ENCODE measurements at regions of chr2 and their contacts with region 1.

Region 1: DNA sequence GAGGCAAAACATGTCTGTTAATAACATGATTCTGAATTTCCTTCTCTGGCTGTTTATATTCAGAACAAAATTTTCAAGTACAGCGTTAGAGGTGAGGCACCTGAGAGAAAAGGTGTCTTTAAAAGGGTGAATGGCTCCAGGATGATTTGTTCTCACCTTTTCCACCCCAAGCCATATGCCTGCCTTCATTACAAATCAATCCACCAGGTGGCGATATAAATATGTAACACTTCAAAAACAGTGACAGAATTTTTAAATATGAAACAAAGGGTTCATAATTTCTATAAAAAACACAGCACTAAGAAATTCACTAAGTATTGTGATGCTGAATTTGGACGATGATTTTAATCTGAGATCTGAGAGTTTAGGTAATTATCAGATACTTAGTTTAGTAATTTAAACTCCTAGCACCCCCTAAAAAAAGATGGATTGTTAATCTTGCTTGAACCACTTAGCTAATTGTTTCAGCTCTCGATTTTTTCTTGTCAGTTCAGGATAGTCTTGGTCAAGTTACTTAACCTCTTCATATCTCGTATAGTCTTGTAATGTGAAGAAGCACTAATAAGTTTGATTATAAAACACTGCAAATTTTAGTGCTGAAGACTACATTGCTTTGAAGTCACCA is 528.8 kb downstream of the CPS1 start:
- DNase-seq: peak; percentile 62
- H3K4me3 Mint-ChIP-seq: no peak overlapping the region
- H3K27ac Mint-ChIP-seq: peak overlapping the region; percentile 56
- H3K4me1 Mint-ChIP-seq: peaks cover 22% of the 10 kb centered on the region
- H3K27me3 Mint-ChIP-seq: no peaks in the 10 kb centered on the region
- CTCF ChIP-seq: peak; percentile 54

Region 2: GRCh38 chr2:211132586-211132985 is 47.4 kb after region 1 on chr2:
- CTCF ChIA-PET with region 1: interaction called, 6 read pairs
- intact Hi-C with region 1: loop called (anchors 2 kb)
- DNase-seq: no peak
- H3K4me3 Mint-ChIP-seq: no peak overlapping the region
- H3K27ac Mint-ChIP-seq: peak overlapping the region; percentile 86
- H3K4me1 Mint-ChIP-seq: peaks cover 48% of the 10 kb centered on the region
- H3K27me3 Mint-ChIP-seq: no peaks in the 10 kb centered on the region
- CTCF ChIP-seq: no peak

Region 3: DNA sequence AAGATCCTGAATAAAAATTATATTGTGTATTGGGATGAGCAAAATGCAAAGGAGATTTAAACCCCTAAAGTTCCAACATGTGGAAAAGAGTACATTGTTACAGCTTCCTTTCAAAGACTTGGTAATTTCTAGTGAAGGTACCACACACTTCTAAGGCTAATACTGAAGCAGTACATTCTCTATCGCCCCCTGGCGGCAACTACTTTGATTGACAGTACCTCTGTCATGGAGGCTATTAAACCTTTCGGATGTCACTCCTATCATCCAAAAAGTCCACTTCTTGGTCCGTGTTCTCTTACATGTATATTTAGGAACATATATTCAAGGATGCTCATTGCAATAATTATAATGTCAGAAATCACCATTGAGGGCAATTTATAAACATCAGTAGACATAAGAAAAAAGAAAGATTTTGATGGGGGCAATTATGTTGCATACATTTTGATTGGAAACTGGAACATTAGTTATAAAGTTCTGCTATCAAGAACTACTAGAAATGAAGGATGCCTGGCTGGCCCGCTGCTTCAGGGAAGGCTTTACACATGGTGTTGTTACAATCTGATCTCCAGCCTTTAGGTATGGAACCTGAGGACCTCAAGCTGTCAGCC is 72.8 kb after region 1 on chr2:
- CTCF ChIA-PET with region 1: interaction called, 17 read pairs
- intact Hi-C with region 1: loop called (anchors 1 kb)
- DNase-seq: peak; percentile 80
- H3K4me3 Mint-ChIP-seq: no peak overlapping the region
- H3K27ac Mint-ChIP-seq: no peak overlapping the region
- H3K4me1 Mint-ChIP-seq: peaks cover 13% of the 10 kb centered on the region
- H3K27me3 Mint-ChIP-seq: no peaks in the 10 kb centered on the region
- CTCF ChIP-seq: peak; percentile 84

Region 4: GRCh38 chr2:211391189-211391567 is 306.0 kb after region 1 on chr2:
- CTCF ChIA-PET with region 1: no interaction called
- intact Hi-C with region 1: loop called (anchors 5 kb)
- DNase-seq: no peak
- H3K4me3 Mint-ChIP-seq: no peak overlapping the region
- H3K27ac Mint-ChIP-seq: peak overlapping the region; percentile 33
- H3K4me1 Mint-ChIP-seq: peaks cover 26% of the 10 kb centered on the region
- H3K27me3 Mint-ChIP-seq: no peaks in the 10 kb centered on the region
- CTCF ChIP-seq: no peak

Measured in Calu3 (cell line).